ENCODE measurements at regions of chr3 and their contacts with region 1.

Region 1: GRCh38 chr3:46208167-46208704 is at the start of gene CCR1:
- DNase-seq: peak; percentile 58
- H3K4me3 Mint-ChIP-seq: peak within 1 kb of the TSS; percentile 78
- H3K27ac Mint-ChIP-seq: peak within 1 kb of the TSS; percentile 91
- H3K4me1 Mint-ChIP-seq: peaks cover 70% of the 10 kb centered on the region
- H3K27me3 Mint-ChIP-seq: no peaks in the 10 kb centered on the region
- total RNA-seq, gene CCR1: 22.6 and 23.2 TPM in 2 replicates

Region 2: DNA sequence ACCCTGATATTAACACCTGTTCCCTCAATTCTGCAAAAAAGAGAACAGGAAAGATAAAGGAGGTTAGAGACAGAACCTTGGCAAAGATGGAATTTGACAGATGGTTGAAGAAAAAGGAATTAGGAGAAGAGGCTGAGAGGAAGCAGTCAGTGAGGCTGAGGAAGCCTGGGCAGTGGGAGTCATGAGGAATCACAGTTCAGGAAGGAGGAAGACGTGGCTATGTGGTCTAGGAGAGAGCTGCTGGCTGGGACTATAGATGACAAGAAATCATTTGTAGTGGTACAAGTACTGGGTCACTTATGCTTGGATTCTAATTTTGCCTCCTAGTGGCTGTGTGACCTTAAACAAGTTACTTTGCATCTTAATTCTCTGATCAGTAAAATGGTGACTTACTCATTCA is 770.9 kb before region 1 on chr3:
- intact Hi-C with region 1: no loop called
- DNase-seq: no peak
- H3K4me3 Mint-ChIP-seq: no peak overlapping the region
- H3K27ac Mint-ChIP-seq: no peak overlapping the region
- H3K4me1 Mint-ChIP-seq: no peaks in the 10 kb centered on the region
- H3K27me3 Mint-ChIP-seq: no peaks in the 10 kb centered on the region

Region 3: DNA sequence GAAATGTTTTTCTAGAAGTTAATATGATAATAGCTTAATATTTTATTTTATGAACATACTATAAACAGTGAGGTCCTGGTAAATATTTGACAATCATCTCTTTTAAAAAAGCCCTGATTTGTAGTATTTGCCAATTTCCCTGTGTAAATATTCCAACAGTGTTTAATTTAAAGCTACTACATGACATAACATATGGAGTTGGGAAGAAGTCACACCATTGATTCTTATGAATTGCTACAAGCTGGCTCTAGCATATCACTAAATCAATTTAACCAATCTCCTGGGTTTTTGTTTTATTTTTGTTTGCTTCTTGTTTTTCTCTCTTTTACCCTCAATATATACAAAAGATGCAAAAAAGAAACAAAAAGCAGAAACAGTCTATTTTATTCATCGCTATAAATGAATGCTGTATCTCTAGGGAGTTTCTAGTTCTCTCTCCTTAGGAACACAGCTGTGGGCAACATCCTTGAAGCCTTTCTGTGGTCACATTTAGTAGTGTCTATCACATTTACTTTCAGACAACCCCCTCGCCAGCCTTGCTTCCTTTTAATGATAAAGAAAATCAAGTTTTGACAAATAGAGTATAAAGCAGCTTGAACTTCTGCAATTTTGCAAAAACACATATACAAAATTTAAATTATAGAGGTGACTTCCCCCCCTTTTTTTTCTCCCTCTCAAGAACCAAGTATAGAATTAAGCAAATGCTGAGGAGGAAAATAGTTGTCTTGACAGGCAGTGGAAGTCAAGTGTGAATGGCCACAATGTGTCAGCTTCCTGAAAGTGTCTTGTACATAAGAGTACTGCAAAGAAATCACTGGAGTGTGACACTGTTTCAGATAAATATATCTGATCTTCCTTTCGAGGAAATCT is 21.5 kb before region 1 on chr3:
- intact Hi-C with region 1: loop called (anchors 1 kb)
- DNase-seq: no peak
- H3K4me3 Mint-ChIP-seq: no peak overlapping the region
- H3K27ac Mint-ChIP-seq: peak overlapping the region; percentile 2
- H3K4me1 Mint-ChIP-seq: peaks cover 42% of the 10 kb centered on the region
- H3K27me3 Mint-ChIP-seq: peaks cover 7% of the 10 kb centered on the region

Region 4: DNA sequence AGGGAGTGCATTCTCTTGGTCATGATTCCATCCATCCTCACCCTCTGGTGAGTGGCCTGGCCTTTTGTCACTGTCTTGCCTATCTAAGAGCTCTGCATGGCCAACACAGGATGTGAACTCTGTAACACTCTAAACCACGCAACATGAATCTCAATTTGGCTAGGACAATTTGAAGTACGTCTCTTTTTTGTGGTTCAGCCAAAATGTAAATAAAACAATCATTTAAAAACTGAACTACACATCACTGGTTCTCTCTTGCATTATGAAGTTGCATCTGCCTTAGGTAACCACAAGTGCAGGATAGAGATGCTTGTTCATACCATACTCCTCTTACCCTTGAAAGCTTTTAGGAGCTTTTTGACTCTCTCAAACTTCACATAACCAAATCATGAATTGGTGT is 61.3 kb after region 1 on chr3:
- intact Hi-C with region 1: loop called (anchors 1 kb)
- DNase-seq: peak; percentile 16
- H3K4me3 Mint-ChIP-seq: peak overlapping the region; percentile 12
- H3K27ac Mint-ChIP-seq: peak overlapping the region; percentile 63
- H3K4me1 Mint-ChIP-seq: peaks cover 70% of the 10 kb centered on the region
- H3K27me3 Mint-ChIP-seq: peaks cover 16% of the 10 kb centered on the region

Region 5: GRCh38 chr3:46276502-46277099 is 68.4 kb after region 1 on chr3:
- intact Hi-C with region 1: loop called (anchors 2 kb)
- DNase-seq: peak; percentile 68
- H3K4me3 Mint-ChIP-seq: no peak overlapping the region
- H3K27ac Mint-ChIP-seq: peak overlapping the region; percentile 21
- H3K4me1 Mint-ChIP-seq: peaks cover 62% of the 10 kb centered on the region
- H3K27me3 Mint-ChIP-seq: peaks cover 11% of the 10 kb centered on the region

Region 6: DNA sequence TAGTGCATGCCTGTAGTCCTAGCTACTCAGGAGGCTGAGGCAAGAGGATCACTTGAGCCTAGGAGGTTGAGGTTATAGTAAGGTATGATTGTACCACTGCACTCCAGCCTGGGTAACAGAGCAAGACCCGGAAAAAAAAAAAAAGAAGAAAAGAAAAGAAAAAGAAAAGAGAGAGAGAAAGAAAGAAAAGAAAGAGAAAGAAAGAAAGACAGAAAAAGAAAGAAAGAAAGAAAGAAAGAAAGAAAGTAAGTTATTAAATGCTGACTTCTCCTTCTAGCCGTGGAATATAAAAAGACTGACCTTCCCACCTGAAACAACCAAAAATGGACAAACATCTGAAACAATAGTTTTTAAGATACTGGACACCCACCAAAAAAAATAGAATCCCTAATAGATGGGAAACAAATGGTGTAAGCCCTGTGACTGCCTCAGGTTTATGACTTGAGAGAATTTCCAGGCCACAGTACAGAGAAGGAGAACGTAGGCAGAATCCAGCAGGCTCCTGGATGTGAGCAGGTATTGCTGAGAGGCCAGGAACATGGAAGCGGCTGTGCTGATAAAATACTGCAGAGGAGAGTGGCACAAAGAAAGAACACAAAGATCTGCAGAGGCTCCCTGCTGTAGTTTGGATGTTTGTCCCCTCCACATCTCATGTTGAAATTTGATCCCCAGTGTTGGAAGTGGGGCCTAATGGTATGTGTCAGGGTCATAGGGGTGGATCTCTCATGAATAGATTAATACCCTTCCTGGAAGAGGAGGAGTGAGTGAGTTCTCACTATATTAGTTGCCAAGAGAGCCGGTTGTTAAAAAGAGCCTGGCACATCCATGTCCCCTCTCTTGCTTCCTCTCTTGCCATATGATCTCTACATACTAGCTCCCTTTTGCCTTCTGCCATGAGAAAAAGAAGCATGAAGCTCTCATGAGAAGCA is 551.3 kb after region 1 on chr3:
- intact Hi-C with region 1: no loop called
- DNase-seq: no peak
- H3K4me3 Mint-ChIP-seq: no peak overlapping the region
- H3K27ac Mint-ChIP-seq: no peak overlapping the region
- H3K4me1 Mint-ChIP-seq: no peaks in the 10 kb centered on the region
- H3K27me3 Mint-ChIP-seq: peaks cover 15% of the 10 kb centered on the region

Measured in activated T-helper 1 cell treated with anti-CD3 and anti-CD28 coated beads, Interleukin-12 subunit alpha, Interleukin-12 subunit beta, Interleukin-2, Interleukin-4 antibody, amounts not matched to agents 30 ng/mL and 10 ng/mL and 1 ng/mL, durations not matched to agents 14 hours and 24 hours and 36 hours (primary cell).